ENCODE measurements at regions of chr3 and their contacts with region 1.

Region 1: DNA sequence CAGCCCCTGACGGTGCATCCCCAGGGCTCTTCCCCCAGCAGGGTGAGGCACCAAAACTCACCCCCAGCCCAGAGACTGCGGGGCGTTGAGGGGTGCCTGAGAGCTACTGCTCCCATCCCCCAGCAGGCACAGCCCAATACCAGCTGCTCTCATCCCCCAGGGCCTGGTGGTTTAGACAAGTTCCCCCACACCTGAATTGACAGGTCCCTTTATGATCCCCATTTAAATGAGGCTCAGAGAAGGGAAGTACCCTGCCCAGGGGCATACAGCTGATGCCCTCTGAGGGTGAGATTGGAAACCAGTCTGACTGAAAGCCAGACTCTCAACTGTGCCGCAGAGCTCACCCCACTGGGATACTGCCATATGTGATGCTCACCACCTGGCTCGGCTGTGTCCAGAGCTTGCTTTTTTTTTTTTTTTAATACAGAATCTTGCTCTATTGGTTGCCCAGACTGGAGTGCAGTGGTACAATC is 20.1 kb downstream of the DUSP7 start:
- DNase-seq: no peak
- H3K4me3 ChIP-seq: no peak overlapping the region
- H3K4me3 Mint-ChIP-seq: no peak overlapping the region
- H3K27ac ChIP-seq: no peak overlapping the region
- H3K27ac Mint-ChIP-seq: peak overlapping the region in 1 of 7 donors; percentile 30
- H3K4me1 ChIP-seq: no peaks in the 10 kb centered on the region
- H3K4me1 Mint-ChIP-seq: peaks cover 0 to 6% (median 0%) of the 10 kb centered on the region in 4 donors
- H3K27me3 ChIP-seq: no peaks in the 10 kb centered on the region
- H3K27me3 Mint-ChIP-seq: no peaks in the 10 kb centered on the region

Region 2: DNA sequence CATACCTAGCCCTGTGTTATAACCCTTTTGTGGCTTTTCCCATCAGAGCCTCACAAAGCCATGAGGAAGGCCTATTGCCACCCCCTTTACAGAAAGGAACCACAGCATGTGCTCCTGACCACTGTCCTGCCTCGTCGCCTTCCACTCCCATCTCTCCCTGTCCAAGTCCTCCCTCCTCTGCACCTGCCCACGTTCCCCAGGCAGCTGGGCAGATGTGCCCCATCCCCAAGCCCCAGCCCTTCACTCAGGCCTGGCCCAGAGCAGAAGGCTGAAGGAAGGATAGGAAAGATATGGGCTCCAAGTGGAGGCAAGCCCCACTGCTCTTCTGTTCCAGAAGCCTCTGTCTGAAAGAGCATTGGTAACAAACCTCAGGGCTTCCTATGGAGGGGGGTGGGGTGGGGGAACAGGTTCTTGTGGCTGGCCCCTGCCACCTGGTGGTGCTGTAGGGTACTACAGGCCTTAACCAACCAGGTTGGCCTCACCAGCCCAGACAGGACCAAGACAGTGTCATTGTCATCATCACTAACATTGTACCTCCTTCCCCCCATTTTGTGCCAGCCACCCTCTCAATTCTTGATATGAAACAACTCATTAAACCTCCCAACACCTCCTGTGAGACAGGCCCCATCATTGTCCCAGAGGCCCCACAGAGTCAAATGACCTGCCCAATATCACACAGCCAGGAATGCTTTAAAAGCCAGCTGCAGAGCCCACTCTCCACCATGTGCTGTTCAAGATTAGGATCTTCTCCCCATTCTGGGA is 108.0 kb after region 1 on chr3:
- CTCF ChIA-PET with region 1: interaction called, 16 read pairs
- POLR2A ChIA-PET with region 1: no interaction called
- intact Hi-C with region 1: loop called (anchors 1 kb)
- DNase-seq: peak; percentile 80 to 91 (median 82)
- H3K4me3 ChIP-seq: no peak overlapping the region
- H3K4me3 Mint-ChIP-seq: no peak overlapping the region
- H3K27ac ChIP-seq: no peak overlapping the region
- H3K27ac Mint-ChIP-seq: peak overlapping the region in 6 of 7 donors; percentile 32 to 82 (median 60)
- H3K4me1 ChIP-seq: peaks cover 6% of the 10 kb centered on the region
- H3K4me1 Mint-ChIP-seq: peaks cover 6 to 11% (median 9%) of the 10 kb centered on the region in 4 donors
- H3K27me3 ChIP-seq: no peaks in the 10 kb centered on the region
- H3K27me3 Mint-ChIP-seq: no peaks in the 10 kb centered on the region

Region 3: DNA sequence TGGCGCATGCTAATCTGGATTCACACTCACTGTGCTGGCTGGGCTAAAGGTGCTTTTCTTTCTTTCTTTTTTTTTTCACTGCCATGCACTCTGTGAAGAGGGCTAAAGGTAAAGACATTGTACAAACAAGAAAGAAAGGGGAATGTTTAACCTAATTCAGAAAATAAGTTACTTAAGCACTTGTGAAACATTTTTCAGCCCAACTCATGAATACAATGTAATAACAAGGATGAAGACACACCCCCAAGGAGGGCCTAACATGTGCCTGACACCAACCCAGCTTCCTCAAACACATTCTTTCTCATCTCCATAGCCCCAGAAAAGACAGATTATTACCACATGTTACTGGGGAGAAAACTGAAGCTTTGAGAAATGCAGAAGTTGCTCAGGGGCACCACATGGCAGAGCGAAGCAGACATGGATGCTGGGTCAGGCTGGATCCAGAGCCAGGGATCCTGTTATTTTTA is 855.4 kb after region 1 on chr3:
- CTCF ChIA-PET with region 1: no interaction called
- POLR2A ChIA-PET with region 1: no interaction called
- intact Hi-C with region 1: no loop called
- DNase-seq: no peak
- H3K4me3 ChIP-seq: no peak overlapping the region
- H3K4me3 Mint-ChIP-seq: peak overlapping the region in 6 of 8 donors; percentile 35 to 92 (median 67)
- H3K27ac ChIP-seq: peak overlapping the region; percentile 62
- H3K27ac Mint-ChIP-seq: peak overlapping the region; percentile 84 to 97 (median 89)
- H3K4me1 ChIP-seq: peaks cover 61% of the 10 kb centered on the region
- H3K4me1 Mint-ChIP-seq: peaks cover 54 to 76% (median 63%) of the 10 kb centered on the region in 4 donors
- H3K27me3 ChIP-seq: no peaks in the 10 kb centered on the region
- H3K27me3 Mint-ChIP-seq: no peaks in the 10 kb centered on the region

Measured in CD4-positive, alpha-beta memory T cell (primary cell).